ENCODE measurements at regions of chr3 and their contacts with region 1.

Region 1: DNA sequence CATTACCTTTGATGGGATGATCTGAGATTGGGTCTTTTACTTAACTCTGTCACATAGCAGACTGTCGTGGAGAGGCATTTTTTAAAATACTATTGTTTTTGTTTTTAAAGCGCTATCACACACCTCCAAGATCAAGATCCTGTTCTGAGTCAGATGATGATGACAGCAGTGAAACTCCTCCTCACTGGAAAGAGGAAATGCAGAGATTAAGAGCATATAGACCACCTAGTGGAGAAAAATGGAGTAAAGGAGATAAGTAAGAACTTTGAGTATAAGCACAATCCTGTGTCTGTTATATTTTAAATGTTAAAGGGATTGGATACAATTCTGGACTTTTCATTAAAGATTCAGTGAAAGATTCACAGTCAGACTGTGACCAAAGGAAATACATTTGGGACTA is 18.4 kb upstream of the ZBTB47 start:
- DNase-seq: peak in 2 of 9 donors; percentile 23 to 28
- ATAC-seq: peak; percentile 63
- H3K4me3 ChIP-seq: no peak overlapping the region
- H3K4me3 Mint-ChIP-seq: no peak overlapping the region
- H3K27ac ChIP-seq: no peak overlapping the region
- H3K27ac Mint-ChIP-seq: peak overlapping the region in 5 of 9 donors; percentile 9 to 63 (median 34)
- H3K4me1 ChIP-seq: peaks cover 21 to 23% of the 10 kb centered on the region in 2 donors
- H3K4me1 Mint-ChIP-seq: peaks cover 0 to 16% (median 4%) of the 10 kb centered on the region in 7 donors
- H3K27me3 ChIP-seq: no peaks in the 10 kb centered on the region
- H3K27me3 Mint-ChIP-seq: no peaks in the 10 kb centered on the region

Region 2: DNA sequence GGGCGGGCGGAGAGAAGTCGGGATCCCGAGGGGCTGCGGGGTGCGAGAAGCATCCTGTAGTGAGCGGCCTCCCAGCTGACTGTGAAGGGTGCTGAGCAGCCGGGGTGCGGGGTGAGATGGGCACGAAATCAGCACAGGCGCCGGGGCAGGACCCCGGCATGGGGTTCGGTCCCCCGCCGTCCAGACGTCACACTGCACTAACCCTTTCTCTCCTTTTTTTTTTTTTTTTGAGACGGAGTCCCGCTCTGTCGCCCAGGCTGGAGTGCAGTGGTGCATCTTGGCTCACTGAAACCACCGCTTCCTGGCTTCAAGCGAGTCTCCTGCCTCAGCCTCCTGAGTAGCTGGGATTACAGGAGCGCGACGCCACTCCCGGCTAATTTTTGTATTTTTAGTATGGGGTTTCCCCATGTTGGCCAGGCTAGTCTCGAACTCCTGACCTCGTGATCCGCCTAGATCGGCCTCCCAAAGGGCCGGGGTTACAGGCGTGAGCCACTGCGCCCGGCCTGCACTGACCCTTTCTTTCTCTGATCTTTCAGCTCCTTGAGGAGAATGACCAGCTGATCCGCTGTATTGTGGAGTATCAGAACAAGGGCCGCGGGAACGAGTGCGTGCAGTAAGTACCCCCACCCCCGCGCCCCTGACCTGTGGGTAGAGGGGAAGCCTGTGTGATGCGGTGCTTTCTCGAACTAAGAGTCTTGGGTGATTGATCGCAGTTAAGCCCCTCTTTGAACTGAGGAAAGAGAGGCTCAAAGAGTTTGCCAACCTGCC is 43.9 kb before region 1 on chr3:
- CTCF ChIA-PET with region 1: no interaction called
- POLR2A ChIA-PET with region 1: interaction called, 5 read pairs
- intact Hi-C with region 1: loop called in 1 of 2 experiments (anchors 2 kb)
- DNase-seq: no peak
- ATAC-seq: peak; percentile 26
- H3K4me3 ChIP-seq: peak overlapping the region; percentile 55
- H3K4me3 Mint-ChIP-seq: peak overlapping the region; percentile 84 to 100 (median 94)
- H3K27ac ChIP-seq: peak overlapping the region; percentile 77
- H3K27ac Mint-ChIP-seq: peak overlapping the region; percentile 59 to 100 (median 94)
- H3K4me1 ChIP-seq: peaks cover 13 to 14% of the 10 kb centered on the region in 2 donors
- H3K4me1 Mint-ChIP-seq: peaks cover 8 to 47% (median 38%) of the 10 kb centered on the region in 7 donors
- H3K27me3 ChIP-seq: no peaks in the 10 kb centered on the region
- H3K27me3 Mint-ChIP-seq: no peaks in the 10 kb centered on the region

Region 3: DNA sequence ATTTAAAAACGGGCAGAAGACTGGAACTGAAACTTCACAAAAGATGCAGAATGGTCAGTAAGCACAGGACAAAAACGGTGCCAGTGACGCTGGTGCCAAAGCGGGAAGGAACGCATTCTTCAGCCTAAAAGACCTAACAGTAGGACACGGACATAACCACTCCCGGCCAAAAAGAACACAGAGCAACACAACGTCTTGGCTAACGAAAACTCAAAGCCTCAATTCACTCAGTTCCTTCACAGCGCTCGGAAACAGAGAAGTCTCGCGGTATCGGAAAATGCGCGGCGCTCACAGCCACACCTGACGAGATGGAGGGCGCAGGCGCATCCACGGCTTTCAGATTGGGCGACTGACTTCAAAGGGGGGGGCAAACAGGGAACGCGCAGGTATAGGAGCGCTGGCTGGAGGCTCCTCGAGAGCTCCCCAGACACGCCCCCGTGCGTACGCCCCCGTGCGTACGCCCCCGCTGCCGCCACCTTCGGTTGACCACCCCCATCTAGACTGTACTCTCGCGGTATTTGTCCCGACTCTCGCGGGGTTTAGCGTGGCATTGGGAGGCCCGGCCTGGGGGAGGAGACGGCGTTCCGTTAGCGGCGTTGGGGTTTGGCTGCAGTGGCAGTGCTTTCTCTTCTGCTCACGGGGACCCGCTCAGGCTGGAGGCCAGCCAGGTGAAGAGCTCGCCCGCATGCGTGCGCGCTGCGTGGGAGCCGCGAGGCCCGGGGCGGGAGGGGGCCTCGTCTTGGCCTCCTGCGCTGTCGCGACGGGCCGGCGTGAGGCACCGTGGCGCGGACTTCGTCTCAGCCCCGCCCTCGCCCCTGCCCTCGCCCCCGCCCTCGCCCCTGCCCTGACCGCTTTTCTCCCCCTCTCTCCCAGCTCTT is 34.8 kb before region 1 on chr3 and contains the start of gene NKTR:
- CTCF ChIA-PET with region 1: no interaction called
- POLR2A ChIA-PET with region 1: interaction called, 10 read pairs
- intact Hi-C with region 1: loop called (anchors 1 kb)
- DNase-seq: peak; percentile 98 to 100 (median 100)
- ATAC-seq: peak; percentile 97
- H3K4me3 ChIP-seq: peak within 1 kb of the TSS; percentile 75
- H3K4me3 Mint-ChIP-seq: peak within 1 kb of the TSS; percentile 91 to 98 (median 95)
- H3K27ac ChIP-seq: peak within 1 kb of the TSS; percentile 93
- H3K27ac Mint-ChIP-seq: peak within 1 kb of the TSS; percentile 95 to 99 (median 98)
- H3K4me1 ChIP-seq: peaks cover 11 to 25% of the 10 kb centered on the region in 2 donors
- H3K4me1 Mint-ChIP-seq: peaks cover 26 to 53% (median 43%) of the 10 kb centered on the region in 7 donors
- H3K27me3 ChIP-seq: no peaks in the 10 kb centered on the region
- H3K27me3 Mint-ChIP-seq: peaks cover 0 to 2% (median 0%) of the 10 kb centered on the region in 5 donors
- total RNA-seq, gene NKTR: 110 to 275 (median 238) TPM

Region 4: GRCh38 chr3:42652611-42653302 is 17.6 kb after region 1 on chr3:
- CTCF ChIA-PET with region 1: no interaction called
- POLR2A ChIA-PET with region 1: interaction called, 3 read pairs
- intact Hi-C with region 1: loop called (anchors 1 to 2 kb)
- DNase-seq: no peak
- ATAC-seq: peak; percentile 76
- H3K4me3 ChIP-seq: no peak overlapping the region
- H3K4me3 Mint-ChIP-seq: peak overlapping the region in 9 of 10 donors; percentile 66 to 91 (median 82)
- H3K27ac ChIP-seq: no peak overlapping the region
- H3K27ac Mint-ChIP-seq: peak overlapping the region in 3 of 9 donors; percentile 32 to 57 (median 48)
- H3K4me1 ChIP-seq: peaks cover 5 to 12% of the 10 kb centered on the region in 2 donors
- H3K4me1 Mint-ChIP-seq: peaks cover 9 to 22% (median 12%) of the 10 kb centered on the region in 7 donors
- H3K27me3 ChIP-seq: no peaks in the 10 kb centered on the region
- H3K27me3 Mint-ChIP-seq: peaks cover 0 to 4% (median 0%) of the 10 kb centered on the region in 5 donors

Region 5: GRCh38 chr3:42749753-42750231 is 114.7 kb after region 1 on chr3:
- CTCF ChIA-PET with region 1: no interaction called
- POLR2A ChIA-PET with region 1: no interaction called
- intact Hi-C with region 1: loop called in 1 of 2 experiments (anchors 5 kb)
- DNase-seq: no peak
- ATAC-seq: peak; percentile 63
- H3K4me3 ChIP-seq: no peak overlapping the region
- H3K4me3 Mint-ChIP-seq: peak overlapping the region in 1 of 10 donors; percentile 12
- H3K27ac ChIP-seq: no peak overlapping the region
- H3K27ac Mint-ChIP-seq: peak overlapping the region in 4 of 9 donors; percentile 17 to 65 (median 36)
- H3K4me1 ChIP-seq: peaks cover 15 to 38% of the 10 kb centered on the region in 2 donors
- H3K4me1 Mint-ChIP-seq: peaks cover 16 to 40% (median 31%) of the 10 kb centered on the region in 7 donors
- H3K27me3 ChIP-seq: no peaks in the 10 kb centered on the region
- H3K27me3 Mint-ChIP-seq: no peaks in the 10 kb centered on the region

Region 6: GRCh38 chr3:42772670-42773408 is 137.7 kb after region 1 on chr3 and contains the start of gene CCDC13:
- CTCF ChIA-PET with region 1: no interaction called
- POLR2A ChIA-PET with region 1: no interaction called
- intact Hi-C with region 1: loop called in 1 of 2 experiments (anchors 2 kb)
- DNase-seq: peak; percentile 72 to 88 (median 75)
- ATAC-seq: peak; percentile 91
- H3K4me3 ChIP-seq: peak within 1 kb of the TSS; percentile 70
- H3K4me3 Mint-ChIP-seq: peak within 1 kb of the TSS; percentile 84 to 93 (median 90)
- H3K27ac ChIP-seq: no peak within 1 kb of the TSS
- H3K27ac Mint-ChIP-seq: peak within 1 kb of the TSS in 8 of 9 donors; percentile 13 to 93 (median 87)
- H3K4me1 ChIP-seq: peaks cover 5 to 6% of the 10 kb centered on the region in 2 donors
- H3K4me1 Mint-ChIP-seq: peaks cover 9 to 13% (median 12%) of the 10 kb centered on the region in 7 donors
- H3K27me3 ChIP-seq: no peaks in the 10 kb centered on the region
- H3K27me3 Mint-ChIP-seq: peaks cover 0 to 16% (median 0%) of the 10 kb centered on the region in 5 donors
- total RNA-seq, gene CCDC13: 0.34 to 1.5 (median 0.70) TPM